ENCODE measurements at regions of chr4 and their contacts with region 1.

Region 1: DNA sequence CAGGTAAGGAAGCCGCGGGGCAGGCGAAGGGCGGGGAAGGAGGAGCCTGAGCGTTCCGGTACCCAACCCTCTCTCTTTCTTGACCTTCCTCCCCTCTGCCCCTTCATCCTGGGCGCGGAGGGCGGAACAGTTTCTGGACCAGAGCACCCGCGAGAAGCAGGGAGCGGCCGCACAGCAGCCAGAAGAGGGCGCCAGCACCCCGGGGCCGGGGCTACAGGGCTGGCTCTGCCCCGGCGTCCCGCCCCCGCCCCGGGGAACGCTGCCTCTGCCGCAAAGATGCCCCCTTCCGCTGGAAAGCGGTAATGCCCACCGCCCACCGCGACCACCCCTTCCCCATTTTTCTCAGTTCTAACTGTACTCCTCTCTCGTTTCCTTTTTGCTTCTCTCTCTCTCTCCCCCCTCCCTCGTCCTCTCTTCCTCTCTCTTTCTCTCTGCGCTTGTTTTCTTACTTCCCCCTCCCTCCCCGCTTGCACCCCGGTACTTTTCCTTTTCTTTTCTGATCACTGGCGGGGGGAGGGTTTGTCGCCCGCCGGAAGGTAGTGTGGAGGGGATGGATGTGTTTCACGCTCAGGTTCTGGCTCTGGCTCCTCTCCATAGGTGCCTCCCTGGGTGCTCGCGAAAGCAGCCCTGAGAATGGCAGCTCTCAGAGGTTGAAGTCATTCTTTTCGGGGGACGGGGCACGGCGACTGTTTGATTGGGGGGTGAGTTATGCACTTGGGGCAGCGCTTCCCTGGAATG is 13.1 kb upstream of the PRDM8 start:
- DNase-seq: peak; percentile 88 to 96 (median 92)
- ATAC-seq: peak; percentile 84
- H3K4me3 ChIP-seq: peak overlapping the region; percentile 75 to 87
- H3K4me3 Mint-ChIP-seq: peak overlapping the region; percentile 99
- H3K27ac ChIP-seq: peak overlapping the region; percentile 60 to 69
- H3K27ac Mint-ChIP-seq: peak overlapping the region; percentile 94
- H3K4me1 ChIP-seq: peaks cover 34% of the 10 kb centered on the region
- H3K4me1 Mint-ChIP-seq: peaks cover 50% of the 10 kb centered on the region
- H3K27me3 ChIP-seq: peaks cover 0 to 3% of the 10 kb centered on the region in 2 experiments
- H3K27me3 Mint-ChIP-seq: peaks cover 4% of the 10 kb centered on the region
- CTCF ChIP-seq: peak; percentile 98

Region 2: DNA sequence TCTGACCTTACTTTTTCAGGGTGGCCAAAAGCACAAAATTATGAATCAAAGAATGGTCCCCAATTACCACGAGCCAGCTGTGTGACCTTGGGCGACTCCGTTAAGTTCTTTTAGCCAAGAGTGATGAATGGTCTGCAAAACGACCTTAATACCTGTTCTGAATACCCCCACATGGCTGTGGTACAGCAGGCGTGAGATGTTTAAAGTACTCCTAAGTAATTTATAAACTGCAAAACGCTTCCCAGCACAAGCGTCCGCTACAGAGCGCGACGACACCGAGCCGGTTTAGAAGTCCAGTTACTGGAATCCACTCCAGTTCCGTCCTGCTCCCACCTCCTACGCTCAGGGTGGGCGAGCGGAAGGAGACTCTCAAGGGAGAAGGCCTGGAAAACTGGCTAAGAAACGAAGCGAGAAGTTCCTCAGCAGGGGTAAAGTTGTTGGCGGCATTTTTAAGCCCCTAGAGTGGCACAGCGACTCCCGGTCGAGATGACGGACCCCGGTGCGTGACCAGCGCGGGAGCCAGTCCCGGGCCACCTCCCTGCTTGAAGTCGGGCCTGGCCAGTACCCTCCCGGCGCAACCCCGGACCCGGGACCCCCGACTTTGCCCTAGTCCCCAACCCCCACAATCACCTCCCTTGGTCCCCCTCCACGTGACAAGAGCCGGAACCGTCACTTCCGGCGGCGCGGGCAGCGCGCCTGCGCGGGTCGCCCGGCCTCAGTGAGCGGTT is 1408.8 kb before region 1 on chr4:
- CTCF ChIA-PET with region 1: no interaction called
- POLR2A ChIA-PET with region 1: no interaction called
- intact Hi-C with region 1: loop called in 1 of 2 experiments (anchors 10 kb)
- DNase-seq: peak; percentile 75 to 93 (median 86)
- ATAC-seq: peak; percentile 57
- H3K4me3 ChIP-seq: peak overlapping the region; percentile 87
- H3K4me3 Mint-ChIP-seq: peak overlapping the region; percentile 92
- H3K27ac ChIP-seq: peak overlapping the region; percentile 82 to 87
- H3K27ac Mint-ChIP-seq: peak overlapping the region; percentile 94
- H3K4me1 ChIP-seq: peaks cover 17% of the 10 kb centered on the region
- H3K4me1 Mint-ChIP-seq: peaks cover 16% of the 10 kb centered on the region
- H3K27me3 ChIP-seq: no peaks in the 10 kb centered on the region
- H3K27me3 Mint-ChIP-seq: no peaks in the 10 kb centered on the region
- CTCF ChIP-seq: no peak

Region 3: DNA sequence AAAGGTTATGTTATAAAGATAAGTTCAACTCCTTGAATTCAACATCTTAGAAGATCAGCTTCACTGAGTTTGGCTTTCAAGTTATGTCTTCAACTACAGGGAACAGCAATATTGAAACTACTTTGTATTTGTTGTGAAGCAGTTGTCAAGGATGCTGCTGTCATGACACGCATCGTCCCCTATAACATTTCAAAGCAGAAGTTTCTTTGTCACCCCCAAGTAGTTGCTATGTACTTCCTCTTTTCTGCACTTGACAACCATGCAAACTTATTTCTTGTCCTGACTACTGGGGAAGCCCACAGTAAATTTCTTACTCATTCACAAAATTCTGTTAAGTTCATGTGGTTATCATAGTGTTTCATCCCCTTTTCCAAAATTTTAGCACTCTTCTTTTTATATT is 125.5 kb before region 1 on chr4:
- CTCF ChIA-PET with region 1: interaction called, 3 read pairs
- POLR2A ChIA-PET with region 1: no interaction called
- intact Hi-C with region 1: loop called (anchors 1 to 5 kb)
- DNase-seq: peak in 5 of 9 experiments; percentile 35 to 93 (median 56)
- ATAC-seq: peak; percentile 91
- H3K4me3 ChIP-seq: peak overlapping the region; percentile 4 to 18
- H3K4me3 Mint-ChIP-seq: peak overlapping the region; percentile 74
- H3K27ac ChIP-seq: peak overlapping the region; percentile 86 to 87
- H3K27ac Mint-ChIP-seq: peak overlapping the region; percentile 94
- H3K4me1 ChIP-seq: peaks cover 13% of the 10 kb centered on the region
- H3K4me1 Mint-ChIP-seq: peaks cover 23% of the 10 kb centered on the region
- H3K27me3 ChIP-seq: no peaks in the 10 kb centered on the region
- H3K27me3 Mint-ChIP-seq: no peaks in the 10 kb centered on the region
- CTCF ChIP-seq: no peak

Region 4: DNA sequence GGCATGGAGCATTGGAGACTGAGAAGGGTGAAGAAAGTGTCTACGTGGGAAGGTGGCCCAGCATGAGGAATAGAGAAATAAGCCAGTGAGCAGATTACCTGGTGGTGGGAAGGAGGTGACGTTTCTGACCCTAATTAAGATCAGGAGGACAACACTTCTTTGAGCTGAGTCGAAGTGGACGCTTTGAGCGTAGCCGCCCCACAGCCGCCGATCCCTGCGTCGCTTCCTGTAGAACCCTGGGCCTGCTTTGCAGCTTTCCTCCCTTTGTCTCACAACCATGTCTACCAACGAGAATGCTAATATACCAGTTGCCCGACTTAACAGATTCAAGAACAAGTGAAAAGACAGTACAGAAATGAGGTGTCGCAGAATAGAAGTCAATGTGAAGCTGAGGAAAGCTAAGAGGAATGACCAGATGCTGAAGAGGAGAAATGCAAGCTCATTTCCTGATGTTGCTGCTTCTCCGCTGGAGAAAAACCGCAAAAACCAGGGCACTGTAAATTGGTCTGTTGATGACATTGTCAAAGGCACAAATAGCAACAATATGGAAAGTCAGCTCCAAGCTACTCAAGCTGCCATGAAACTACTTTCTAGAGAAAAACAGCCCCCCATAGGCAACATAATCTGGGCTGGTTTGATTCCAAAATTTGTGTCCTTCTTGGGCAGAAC is 104.8 kb before region 1 on chr4:
- CTCF ChIA-PET with region 1: interaction called, 11 read pairs
- POLR2A ChIA-PET with region 1: no interaction called
- intact Hi-C with region 1: loop called in 1 of 2 experiments (anchors 5 kb)
- DNase-seq: no peak
- ATAC-seq: no peak
- H3K4me3 ChIP-seq: no peak overlapping the region
- H3K4me3 Mint-ChIP-seq: no peak overlapping the region
- H3K27ac ChIP-seq: no peak overlapping the region
- H3K27ac Mint-ChIP-seq: no peak overlapping the region
- H3K4me1 ChIP-seq: peaks cover 4% of the 10 kb centered on the region
- H3K4me1 Mint-ChIP-seq: peaks cover 9% of the 10 kb centered on the region
- H3K27me3 ChIP-seq: no peaks in the 10 kb centered on the region
- H3K27me3 Mint-ChIP-seq: no peaks in the 10 kb centered on the region
- CTCF ChIP-seq: no peak

Region 5: GRCh38 chr4:80138551-80139538 is 45.4 kb before region 1 on chr4:
- CTCF ChIA-PET with region 1: interaction called, 55 read pairs
- POLR2A ChIA-PET with region 1: interaction called, 6 read pairs
- intact Hi-C with region 1: loop called in 1 of 2 experiments (anchors 1 kb)
- DNase-seq: peak in 8 of 9 experiments; percentile 36 to 74 (median 62)
- ATAC-seq: peak; percentile 95
- H3K4me3 ChIP-seq: no peak overlapping the region
- H3K4me3 Mint-ChIP-seq: no peak overlapping the region
- H3K27ac ChIP-seq: peak overlapping the region in 1 of 2 experiments; percentile 21
- H3K27ac Mint-ChIP-seq: peak overlapping the region; percentile 70
- H3K4me1 ChIP-seq: peaks cover 20% of the 10 kb centered on the region
- H3K4me1 Mint-ChIP-seq: peaks cover 46% of the 10 kb centered on the region
- H3K27me3 ChIP-seq: no peaks in the 10 kb centered on the region
- H3K27me3 Mint-ChIP-seq: no peaks in the 10 kb centered on the region
- CTCF ChIP-seq: no peak

Region 6: GRCh38 chr4:80202190-80202711 is 18.0 kb after region 1 on chr4:
- CTCF ChIA-PET with region 1: interaction called, 158 read pairs
- POLR2A ChIA-PET with region 1: interaction called, 19 read pairs
- intact Hi-C with region 1: loop called (anchors 1 to 2 kb)
- DNase-seq: peak; percentile 58 to 86 (median 80)
- ATAC-seq: peak; percentile 62
- H3K4me3 ChIP-seq: peak overlapping the region; percentile 67 to 75
- H3K4me3 Mint-ChIP-seq: peak overlapping the region; percentile 83
- H3K27ac ChIP-seq: peak overlapping the region; percentile 48 to 66
- H3K27ac Mint-ChIP-seq: peak overlapping the region; percentile 73
- H3K4me1 ChIP-seq: peaks cover 16% of the 10 kb centered on the region
- H3K4me1 Mint-ChIP-seq: peaks cover 24% of the 10 kb centered on the region
- H3K27me3 ChIP-seq: peaks cover 0 to 4% of the 10 kb centered on the region in 2 experiments
- H3K27me3 Mint-ChIP-seq: peaks cover 10% of the 10 kb centered on the region
- CTCF ChIP-seq: peak; percentile 78

Region 7: GRCh38 chr4:80215449-80216052 is 31.3 kb after region 1 on chr4:
- CTCF ChIA-PET with region 1: interaction called, 16 read pairs
- POLR2A ChIA-PET with region 1: no interaction called
- intact Hi-C with region 1: loop called (anchors 1 kb)
- DNase-seq: peak in 2 of 9 experiments; percentile 28 to 56
- ATAC-seq: no peak
- H3K4me3 ChIP-seq: no peak overlapping the region
- H3K4me3 Mint-ChIP-seq: no peak overlapping the region
- H3K27ac ChIP-seq: no peak overlapping the region
- H3K27ac Mint-ChIP-seq: no peak overlapping the region
- H3K4me1 ChIP-seq: no peaks in the 10 kb centered on the region
- H3K4me1 Mint-ChIP-seq: peaks cover 1% of the 10 kb centered on the region
- H3K27me3 ChIP-seq: no peaks in the 10 kb centered on the region
- H3K27me3 Mint-ChIP-seq: peaks cover 25% of the 10 kb centered on the region
- CTCF ChIP-seq: peak; percentile 91

Measured in CD8-positive, alpha-beta T cell (primary cell).